ENCODE measurements at regions of chr21 and their contacts with region 1.

Region 1: DNA sequence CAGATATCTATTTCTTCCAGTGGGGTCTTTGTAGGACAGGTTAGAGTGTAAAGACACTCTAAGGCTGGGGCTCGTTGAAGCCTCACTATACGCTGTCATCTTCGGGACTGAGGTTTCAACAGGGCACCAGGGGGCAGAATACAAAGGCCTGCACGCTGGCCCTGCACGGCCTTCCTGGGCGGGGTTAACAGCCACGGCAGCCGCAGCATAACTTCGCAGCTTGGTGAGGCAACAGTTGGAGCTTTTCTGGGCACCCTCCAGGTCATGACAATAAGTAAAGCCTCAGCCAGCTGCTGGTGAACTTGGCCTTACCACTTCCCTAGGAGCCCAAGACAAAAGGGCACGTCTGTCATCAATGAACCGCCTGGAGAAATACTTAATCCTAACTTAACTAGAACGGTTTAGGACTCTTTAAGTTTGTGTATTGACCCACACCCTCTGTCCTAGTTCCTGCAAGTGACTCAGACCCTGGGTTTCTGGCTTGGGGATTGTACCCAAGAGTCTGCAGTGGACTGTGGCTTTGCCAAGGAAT is 2.3 kb upstream of the RUNX1 start:
- DNase-seq: peak; percentile 87 to 92 (median 89)
- ATAC-seq: peak; percentile 86
- H3K4me3 ChIP-seq: no peak overlapping the region
- H3K4me1 ChIP-seq: peaks cover 21% of the 10 kb centered on the region
- CTCF ChIP-seq: peak; percentile 49

Region 2: DNA sequence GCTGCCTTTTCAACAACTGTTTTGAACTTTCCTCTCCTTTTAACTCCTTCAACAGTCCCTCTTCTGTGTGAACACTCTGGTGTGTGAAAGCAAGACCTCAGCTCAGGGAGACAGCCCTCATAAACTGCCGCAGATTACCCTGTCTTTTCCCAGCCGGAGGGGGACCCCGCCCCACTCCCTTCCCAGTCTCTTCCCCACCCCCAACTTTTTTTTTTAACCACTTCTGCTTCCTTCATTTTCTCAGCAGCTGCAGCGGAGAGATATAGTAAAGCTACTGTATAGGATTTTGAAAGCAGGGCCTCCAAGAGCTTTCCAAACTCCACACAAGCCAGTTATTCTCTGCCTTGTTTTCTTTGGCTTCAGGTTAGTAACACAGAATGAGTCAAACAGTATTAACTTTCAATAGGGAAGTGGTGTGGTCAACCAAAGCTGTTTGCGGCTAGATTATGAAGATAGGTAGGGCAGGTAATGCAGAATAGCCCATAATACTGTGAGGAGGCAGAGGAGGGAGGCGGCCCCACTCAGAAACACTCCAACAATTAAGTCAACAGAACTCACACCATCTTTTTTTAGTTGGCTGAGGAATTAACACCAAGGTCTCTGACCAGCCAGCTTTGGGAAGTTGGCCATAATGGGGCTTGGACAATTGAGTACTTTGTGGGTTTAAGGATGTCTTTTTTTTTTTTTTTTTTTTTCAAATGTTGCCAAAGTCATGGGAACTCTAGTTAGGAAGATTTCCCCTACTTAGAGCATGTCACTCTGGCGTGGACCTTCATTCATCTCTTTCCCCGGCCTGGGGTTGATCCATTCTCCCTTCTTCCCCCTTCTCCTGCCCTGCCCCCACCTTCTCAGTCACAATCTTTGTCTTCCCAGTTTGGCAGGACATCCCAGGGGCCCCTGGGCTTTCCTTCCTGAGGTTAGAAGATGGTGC is 205.6 kb before region 1 on chr21:
- intact Hi-C with region 1: no loop called
- DNase-seq: peak in 2 of 3 donors; percentile 41 to 65
- ATAC-seq: peak; percentile 91
- H3K4me3 ChIP-seq: no peak overlapping the region
- H3K4me1 ChIP-seq: peaks cover 25% of the 10 kb centered on the region
- CTCF ChIP-seq: no peak

Region 3: GRCh38 chr21:35190201-35190701 is 138.9 kb after region 1 on chr21:
- intact Hi-C with region 1: loop called in 1 of 2 experiments (anchors 5 kb)
- DNase-seq: no peak
- ATAC-seq: no peak
- H3K4me3 ChIP-seq: no peak overlapping the region
- H3K4me1 ChIP-seq: no peaks in the 10 kb centered on the region
- CTCF ChIP-seq: no peak

Measured in mucosa of descending colon (tissue), 3 donors.